ENCODE measurements at regions of chr4 and their contacts with region 1.

Region 1: GRCh38 chr4:6902318-6903042 is 7.1 kb upstream of the TBC1D14 start:
- DNase-seq: no peak
- CTCF ChIP-seq: no peak

Region 2: DNA sequence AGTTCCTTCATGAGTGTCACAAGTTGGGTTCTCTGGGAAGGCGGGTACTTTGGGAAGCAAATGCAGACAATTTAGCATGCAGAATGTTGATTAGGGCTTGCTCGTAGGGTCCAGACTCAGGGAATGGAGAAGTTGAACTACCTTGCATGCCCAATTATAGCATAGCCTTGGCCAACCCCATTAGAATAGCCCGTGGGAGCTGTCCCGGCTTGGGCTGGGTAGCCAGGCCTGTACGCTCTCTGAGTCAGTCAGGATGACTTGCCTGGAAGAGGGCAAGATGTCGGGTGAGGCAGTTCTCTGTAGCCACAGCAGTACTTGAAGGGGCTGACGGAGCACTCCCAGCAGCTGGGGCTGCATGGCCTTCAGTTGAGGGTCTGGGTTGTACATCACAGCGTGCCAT is 100.5 kb before region 1 on chr4:
- CTCF ChIA-PET with region 1: no interaction called
- POLR2A ChIA-PET with region 1: no interaction called
- DNase-seq: no peak
- CTCF ChIP-seq: no peak

Region 3: GRCh38 chr4:6986781-6987587 is 84.5 kb after region 1 on chr4:
- CTCF ChIA-PET with region 1: interaction called, 3 read pairs
- POLR2A ChIA-PET with region 1: interaction called, 12 read pairs
- DNase-seq: peak; percentile 99
- CTCF ChIP-seq: no peak

Measured in GM10248 (cell line).